ENCODE measurements at regions of chr1 and their contacts with region 1.

Region 1: GRCh38 chr1:40849801-40850592 is 12.2 kb downstream of the CITED4 start:
- DNase-seq: no peak
- H3K4me3 ChIP-seq: no peak overlapping the region
- H3K27me3 ChIP-seq: no peaks in the 10 kb centered on the region
- CTCF ChIP-seq: peak; percentile 85

Region 2: DNA sequence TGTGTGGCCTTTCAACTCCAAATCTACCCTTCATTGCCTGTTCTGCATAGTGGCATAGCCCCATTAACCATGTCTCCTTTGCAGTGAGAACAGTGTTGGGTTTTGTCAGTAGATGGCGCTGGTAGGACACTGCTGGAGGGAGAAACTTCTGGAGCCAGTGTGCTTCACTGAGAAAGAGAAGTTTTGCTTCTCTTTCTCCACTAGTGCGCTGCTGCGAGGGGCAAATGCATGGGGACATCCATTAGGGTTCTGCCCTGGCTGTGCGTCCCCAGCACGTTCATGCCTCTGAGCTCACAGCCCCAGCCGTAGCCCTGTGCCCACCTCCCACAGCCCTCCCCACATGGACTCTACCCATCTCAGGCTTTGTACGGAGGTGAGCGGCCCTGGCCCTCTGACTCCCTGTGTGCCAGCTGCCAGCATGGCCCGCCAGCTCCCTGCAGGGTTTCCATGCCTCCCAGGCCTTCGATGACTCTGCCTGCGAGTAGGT is 237.6 kb before region 1 on chr1:
- CTCF ChIA-PET with region 1: interaction called, 10 read pairs
- POLR2A ChIA-PET with region 1: no interaction called
- DNase-seq: no peak
- H3K4me3 ChIP-seq: no peak overlapping the region
- H3K27me3 ChIP-seq: peaks cover 3% of the 10 kb centered on the region; the same call in 1 of the 2 replicates
- CTCF ChIP-seq: peak; percentile 87

Region 3: GRCh38 chr1:40774266-40774998 is 75.6 kb before region 1 on chr1:
- CTCF ChIA-PET with region 1: interaction called, 11 read pairs
- POLR2A ChIA-PET with region 1: no interaction called
- DNase-seq: no peak
- H3K4me3 ChIP-seq: no peak overlapping the region
- H3K27me3 ChIP-seq: no peaks in the 10 kb centered on the region
- CTCF ChIP-seq: peak; percentile 79

Region 4: GRCh38 chr1:40838045-40838979 is 11.7 kb before region 1 on chr1:
- CTCF ChIA-PET with region 1: interaction called, 25 read pairs
- POLR2A ChIA-PET with region 1: no interaction called
- DNase-seq: no peak
- H3K4me3 ChIP-seq: no peak overlapping the region
- H3K27me3 ChIP-seq: peaks cover 5% of the 10 kb centered on the region
- CTCF ChIP-seq: no peak

Region 5: GRCh38 chr1:40862008-40862863 is 12.2 kb after region 1 on chr1 and contains the start of gene CITED4:
- CTCF ChIA-PET with region 1: interaction called, 52 read pairs
- POLR2A ChIA-PET with region 1: no interaction called
- DNase-seq: peak; percentile 39
- H3K4me3 ChIP-seq: peak within 1 kb of the TSS; percentile 54
- H3K27me3 ChIP-seq: no peaks in the 10 kb centered on the region; the same call in 1 of the 2 replicates
- CTCF ChIP-seq: 0 out of 2 replicates have a peak, but pooled peaks have one; percentile 17
- polyA plus RNA-seq, gene CITED4: 0.67 and 0.80 TPM in 2 replicates

Region 6: DNA sequence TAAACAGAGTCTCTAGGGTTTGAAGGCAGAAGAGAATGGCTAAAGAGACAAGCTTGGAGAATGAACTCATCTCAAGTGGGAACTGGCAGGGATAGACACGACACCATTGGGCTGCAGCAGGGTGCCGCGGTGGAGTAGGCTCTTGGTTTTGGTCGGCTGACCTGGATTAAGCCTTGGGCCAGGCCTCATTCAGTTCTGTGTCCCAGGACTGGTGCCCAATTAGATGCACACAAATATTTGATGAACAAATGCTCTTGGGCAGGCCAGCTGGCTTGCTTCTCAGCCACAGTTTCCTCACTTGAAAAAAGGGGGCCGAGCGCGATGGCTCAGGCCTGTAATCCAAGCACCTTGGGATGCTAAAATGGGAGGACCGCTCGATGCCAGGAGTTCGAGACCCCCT is 65.6 kb after region 1 on chr1:
- CTCF ChIA-PET with region 1: no interaction called
- POLR2A ChIA-PET with region 1: no interaction called
- DNase-seq: no peak
- H3K4me3 ChIP-seq: no peak overlapping the region
- H3K27me3 ChIP-seq: no peaks in the 10 kb centered on the region
- CTCF ChIP-seq: no peak

Region 7: GRCh38 chr1:41003640-41004220 is 153.7 kb after region 1 on chr1:
- CTCF ChIA-PET with region 1: interaction called, 40 read pairs
- POLR2A ChIA-PET with region 1: no interaction called
- DNase-seq: peak; percentile 93
- H3K4me3 ChIP-seq: no peak overlapping the region
- H3K27me3 ChIP-seq: no peaks in the 10 kb centered on the region
- CTCF ChIP-seq: peak; percentile 71

Region 8: DNA sequence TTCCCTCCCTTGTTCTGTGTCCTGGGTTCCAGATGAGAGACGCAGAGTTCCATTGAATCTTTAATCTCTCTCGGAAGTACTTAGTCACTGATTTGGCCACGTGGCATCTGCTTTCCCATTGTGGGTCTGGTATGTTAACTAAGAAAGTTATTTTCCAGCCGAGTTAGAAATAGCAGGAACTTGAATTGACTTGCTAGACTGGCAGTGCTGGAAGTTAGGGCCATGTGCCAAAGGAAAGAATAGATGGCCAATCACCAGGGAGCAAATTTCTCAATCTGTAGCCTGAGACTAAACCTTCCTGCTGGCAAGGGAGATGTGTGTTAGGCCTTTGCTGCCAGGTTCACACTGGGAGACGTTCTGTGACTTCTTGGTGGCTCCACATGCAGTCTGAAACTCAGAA is 195.7 kb after region 1 on chr1:
- CTCF ChIA-PET with region 1: no interaction called
- POLR2A ChIA-PET with region 1: no interaction called
- DNase-seq: no peak
- H3K4me3 ChIP-seq: no peak overlapping the region
- H3K27me3 ChIP-seq: no peaks in the 10 kb centered on the region
- CTCF ChIP-seq: no peak